ENCODE measurements at regions of chr6 and their contacts with region 1.

Region 1: DNA sequence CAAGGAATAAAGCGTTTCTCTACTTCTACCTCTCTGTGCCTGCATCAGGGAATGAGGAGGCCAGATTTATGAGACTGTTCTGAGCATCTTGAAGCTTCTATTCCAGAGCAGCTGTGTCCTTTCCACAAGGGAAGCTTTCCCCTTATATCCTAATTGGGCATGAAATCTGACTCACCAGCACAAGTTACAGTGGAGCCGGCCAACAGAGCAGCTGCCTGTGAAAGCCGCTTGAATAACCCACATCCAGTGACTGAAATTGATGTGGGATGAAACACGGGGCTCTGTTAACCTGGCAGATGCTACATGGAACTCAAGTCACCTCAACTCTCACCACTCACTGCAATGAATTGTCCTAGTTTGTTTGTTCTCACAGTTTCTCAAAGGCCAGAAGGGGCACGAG is 400.3 kb downstream of the TFAP2A start:
- DNase-seq: no peak

Region 2: GRCh38 chr6:8389036-8389818 is 1625.3 kb before region 1 on chr6:
- in situ Hi-C with region 1: loop called (anchors 10 kb)
- DNase-seq: no peak

Region 3: DNA sequence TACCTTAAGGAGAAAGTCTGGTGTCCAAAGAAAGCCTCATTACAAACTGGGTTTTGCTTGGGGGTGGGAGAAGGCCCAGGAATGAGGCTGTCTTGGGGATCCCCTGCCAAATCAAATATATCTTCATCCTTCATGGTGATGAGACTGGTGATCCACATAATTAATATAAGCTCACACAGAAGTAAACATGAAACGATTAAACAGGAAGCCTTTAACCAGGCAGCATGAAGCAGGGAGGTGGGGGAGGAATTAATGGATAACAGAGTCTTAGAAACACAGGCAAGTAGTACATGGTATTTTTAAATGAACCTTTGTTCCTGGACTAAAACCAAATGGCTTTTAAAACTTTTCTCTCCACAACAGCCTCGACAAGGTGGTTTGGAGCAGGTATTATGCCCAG is 37.1 kb before region 1 on chr6:
- in situ Hi-C with region 1: no loop called
- DNase-seq: no peak

Measured in G401 (cell line).